Pancreas (tissue), 10 donors: ENCODE measurements at regions of chr19 and their contacts with region 1.

Region 1: DNA sequence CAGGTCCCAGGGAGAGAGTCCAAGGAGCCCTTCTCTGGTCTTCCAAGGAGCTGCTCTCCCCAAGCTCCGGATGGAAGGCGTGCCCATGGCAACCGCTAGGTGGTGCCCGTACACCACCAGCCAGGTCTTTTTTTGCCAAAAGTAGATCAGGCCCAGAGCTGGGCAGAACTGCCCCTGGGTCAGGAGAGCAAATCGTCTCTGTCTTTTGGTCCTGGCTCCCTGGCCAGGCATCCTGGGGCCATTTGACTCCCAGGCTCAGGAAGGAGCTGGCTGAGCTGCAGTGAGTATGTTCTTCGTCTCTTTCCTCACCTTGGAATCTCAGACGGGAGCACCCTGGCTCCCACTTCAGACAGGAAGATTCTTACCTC is 24.6 kb upstream of the BCL3 start:
- DNase-seq: peak; percentile 74 to 92 (median 85)
- ATAC-seq: peak; percentile 75 to 89 (median 81)
- H3K4me3 ChIP-seq: peak overlapping the region in 1 of 4 donors; percentile 30
- H3K27ac ChIP-seq: peak overlapping the region in 2 of 4 donors; percentile 71 to 78
- H3K4me1 ChIP-seq: peaks cover 14 to 24% (median 17%) of the 10 kb centered on the region in 3 donors
- H3K27me3 ChIP-seq: no peaks in the 10 kb centered on the region
- CTCF ChIP-seq: peak; percentile 91 to 97 (median 95)

Region 2: DNA sequence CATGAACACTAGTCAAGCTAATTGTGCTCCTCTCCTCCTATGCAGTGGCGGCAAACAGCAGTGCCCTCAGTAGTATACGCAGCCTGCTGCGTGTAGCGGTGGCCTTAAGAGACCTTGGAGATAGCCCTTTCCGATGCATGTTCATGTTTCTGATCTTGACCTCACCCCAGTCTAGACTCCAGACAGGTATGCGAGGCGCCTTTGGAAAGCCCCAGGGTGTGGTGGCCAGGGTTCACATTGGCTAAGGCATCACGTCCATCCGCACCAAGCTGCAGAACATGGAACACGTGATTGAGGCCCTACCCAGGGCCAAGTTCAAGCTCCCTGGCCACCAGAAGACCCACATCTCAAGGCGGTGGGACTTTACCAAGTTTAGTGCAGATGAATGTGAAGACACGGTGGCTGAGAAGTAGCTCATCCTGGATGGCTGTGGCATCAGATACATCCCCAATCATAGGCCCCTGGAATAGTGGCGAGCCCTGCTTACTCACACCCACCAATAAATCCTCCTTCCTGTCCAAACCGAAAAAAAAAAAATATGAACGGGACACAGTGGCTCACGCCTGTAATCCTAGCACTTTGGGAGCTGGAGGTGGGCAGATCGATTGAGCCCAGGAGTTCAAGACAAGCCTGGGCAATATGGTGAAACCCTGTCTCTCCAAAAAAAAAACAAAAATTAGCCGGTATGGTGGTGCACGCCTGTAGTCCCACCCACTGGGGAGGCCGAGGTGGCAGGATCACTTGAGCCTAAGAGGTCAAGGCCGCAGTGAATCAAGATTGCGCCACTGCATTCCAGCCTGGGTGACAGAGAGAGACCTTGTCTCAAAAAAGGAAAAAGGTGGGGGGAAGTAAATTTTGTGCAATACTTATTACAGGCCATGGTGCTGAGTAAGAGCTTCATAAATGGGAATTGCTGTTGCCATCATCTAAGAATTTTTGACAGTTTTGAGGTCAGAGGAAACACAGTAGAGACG is 41.3 kb after region 1 on chr19:
- intact Hi-C with region 1: loop called in 1 of 3 experiments (anchors 5 kb)
- DNase-seq: no peak
- ATAC-seq: peak in 3 of 4 donors; percentile 1 to 47 (median 29)
- H3K4me3 ChIP-seq: no peak overlapping the region
- H3K27ac ChIP-seq: no peak overlapping the region
- H3K4me1 ChIP-seq: no peaks in the 10 kb centered on the region
- H3K27me3 ChIP-seq: no peaks in the 10 kb centered on the region
- CTCF ChIP-seq: no peak

Region 3: DNA sequence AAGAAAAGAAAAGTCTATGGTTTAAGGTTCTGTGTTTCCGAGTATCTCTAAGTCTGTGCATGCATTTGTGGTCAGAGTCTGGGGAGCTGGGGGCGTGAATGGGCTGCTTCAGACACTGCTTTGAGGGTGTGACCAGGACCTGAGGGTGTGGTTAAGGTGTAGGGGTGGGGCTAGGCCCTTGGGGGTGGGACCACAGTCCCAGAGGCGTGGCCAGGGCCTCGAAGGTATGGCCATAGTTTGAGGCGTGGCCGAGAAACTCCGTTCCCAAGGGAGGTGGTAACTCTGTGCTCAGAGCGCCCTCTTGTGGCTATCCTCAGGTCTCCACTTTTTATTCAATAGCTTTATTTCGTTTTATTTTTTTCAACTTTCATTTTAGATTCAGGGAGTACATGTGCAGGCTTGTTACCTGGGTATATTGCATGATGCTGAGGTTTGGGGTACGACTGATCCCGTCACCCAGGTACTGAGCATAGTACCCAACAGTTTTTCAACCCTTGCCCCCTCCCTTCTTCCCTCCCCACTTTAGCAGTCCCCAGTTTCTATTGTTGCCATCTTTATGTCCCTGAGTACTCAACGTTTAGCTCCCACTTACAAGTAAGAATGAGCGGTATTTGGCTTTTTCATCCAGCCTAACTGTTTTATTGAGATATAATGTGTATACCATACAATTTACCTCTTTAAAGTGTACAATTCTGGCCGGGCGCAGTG is 46.8 kb after region 1 on chr19:
- intact Hi-C with region 1: loop called in 2 of 3 experiments (anchors 2 to 5 kb)
- DNase-seq: peak; percentile 94 to 98 (median 96)
- ATAC-seq: peak; percentile 99 to 100 (median 100)
- H3K4me3 ChIP-seq: no peak overlapping the region
- H3K27ac ChIP-seq: no peak overlapping the region
- H3K4me1 ChIP-seq: no peaks in the 10 kb centered on the region
- H3K27me3 ChIP-seq: no peaks in the 10 kb centered on the region
- CTCF ChIP-seq: peak; percentile 75 to 88 (median 80)